ENCODE measurements at regions of chr16 and their contacts with region 1.

Region 1: GRCh38 chr16:11639925-11640899 is 28.0 kb upstream of the SNN start:
- DNase-seq: peak; percentile 54
- H3K4me3 ChIP-seq: no peak overlapping the region
- H3K27ac ChIP-seq: no peak overlapping the region
- H3K4me1 ChIP-seq: peaks cover 14% of the 10 kb centered on the region
- H3K27me3 ChIP-seq: no peaks in the 10 kb centered on the region
- CTCF ChIP-seq: no peak

Region 2: DNA sequence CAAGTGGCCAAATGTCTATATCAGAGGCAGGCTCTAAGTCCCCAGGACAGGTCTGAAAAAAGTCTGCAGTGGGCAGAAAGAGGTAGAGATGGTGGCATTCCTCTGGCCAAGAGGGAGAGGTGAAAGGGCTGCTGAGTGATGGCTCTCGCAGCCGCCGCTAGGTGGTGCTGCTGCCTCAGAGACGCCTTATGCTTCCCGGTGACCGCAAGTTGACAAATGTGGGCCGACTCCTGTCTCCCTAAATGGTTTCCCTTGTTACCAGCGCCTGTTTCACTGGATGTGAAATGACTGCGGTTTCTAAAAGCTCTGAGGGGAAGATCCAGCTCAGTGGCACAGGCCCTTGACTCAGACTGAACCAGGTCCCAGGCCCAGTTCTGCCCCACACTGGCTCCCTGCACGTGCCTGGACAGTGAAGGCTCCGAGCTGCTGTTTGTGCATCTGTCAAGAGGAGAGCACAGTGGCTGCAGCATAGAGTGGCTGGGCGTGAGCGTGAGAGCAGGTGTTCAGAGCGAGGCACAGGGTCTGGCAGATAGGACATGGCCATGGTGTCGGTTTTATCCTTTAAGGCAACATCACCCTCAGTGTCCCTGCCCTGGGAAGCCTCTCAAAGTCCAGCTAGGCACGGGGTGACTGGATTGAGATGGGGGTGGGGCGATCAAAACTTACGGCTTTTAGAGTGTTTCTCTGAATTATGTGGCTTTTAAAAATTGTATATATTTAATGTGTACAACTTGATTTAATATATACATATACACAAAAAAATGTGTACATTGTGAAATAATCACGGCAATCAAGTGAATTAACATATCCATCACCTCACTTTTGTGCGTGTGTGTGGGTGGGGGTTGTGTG is 675.9 kb before region 1 on chr16:
- CTCF ChIA-PET with region 1: no interaction called
- POLR2A ChIA-PET with region 1: no interaction called
- intact Hi-C with region 1: loop called (anchors 5 kb)
- DNase-seq: peak; percentile 83
- H3K4me3 ChIP-seq: no peak overlapping the region
- H3K27ac ChIP-seq: no peak overlapping the region
- H3K4me1 ChIP-seq: no peaks in the 10 kb centered on the region
- H3K27me3 ChIP-seq: no peaks in the 10 kb centered on the region
- CTCF ChIP-seq: peak; percentile 98

Region 3: DNA sequence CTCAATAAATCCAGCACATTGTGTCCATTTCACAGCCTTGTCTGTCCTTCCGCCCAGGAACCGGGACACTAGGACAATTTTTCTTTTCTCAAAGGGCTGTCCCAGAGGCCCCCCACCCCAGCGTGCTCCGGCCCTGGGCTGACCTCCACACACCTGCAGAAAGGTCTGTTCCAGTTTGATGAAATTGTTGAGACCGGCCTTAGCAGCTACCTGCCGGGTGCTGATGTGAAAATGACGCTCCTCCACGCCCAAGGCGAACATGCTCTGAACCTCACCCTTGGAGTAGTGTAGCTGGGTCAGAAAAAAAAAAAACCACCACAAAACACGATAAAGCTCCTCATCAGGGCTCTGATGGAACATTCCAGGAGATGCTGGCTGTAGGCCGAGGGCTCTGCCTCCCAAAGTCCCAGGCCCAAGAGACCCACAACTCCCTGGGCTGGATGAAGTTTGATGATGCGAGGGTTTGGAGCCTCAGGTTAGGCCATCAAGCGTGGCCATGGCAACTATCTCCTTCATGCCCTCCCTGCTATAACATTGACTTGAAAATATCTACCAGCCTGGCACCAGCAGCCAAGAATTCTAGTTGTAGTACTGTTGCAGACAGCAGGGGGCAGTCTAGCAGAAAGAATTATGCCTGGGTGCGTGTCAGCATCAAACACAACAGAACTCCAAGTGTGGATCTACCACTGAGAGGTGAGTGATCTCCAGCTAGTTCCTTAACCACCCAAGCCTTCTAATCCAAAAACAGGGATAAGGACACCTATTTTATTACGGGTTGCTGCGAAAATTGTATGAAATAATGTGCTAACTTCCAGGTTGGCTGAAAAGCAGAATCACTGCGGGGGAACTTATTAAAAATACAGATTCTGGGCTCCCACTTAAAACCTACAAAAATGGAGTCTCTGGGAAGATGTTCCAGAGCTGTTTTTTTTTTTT is 232.9 kb before region 1 on chr16:
- CTCF ChIA-PET with region 1: interaction called, 12 read pairs
- POLR2A ChIA-PET with region 1: no interaction called
- intact Hi-C with region 1: loop called (anchors 2 kb)
- DNase-seq: peak; percentile 82
- H3K4me3 ChIP-seq: no peak overlapping the region
- H3K27ac ChIP-seq: no peak overlapping the region
- H3K4me1 ChIP-seq: peaks cover 19% of the 10 kb centered on the region
- H3K27me3 ChIP-seq: no peaks in the 10 kb centered on the region
- CTCF ChIP-seq: peak; percentile 84

Region 4: DNA sequence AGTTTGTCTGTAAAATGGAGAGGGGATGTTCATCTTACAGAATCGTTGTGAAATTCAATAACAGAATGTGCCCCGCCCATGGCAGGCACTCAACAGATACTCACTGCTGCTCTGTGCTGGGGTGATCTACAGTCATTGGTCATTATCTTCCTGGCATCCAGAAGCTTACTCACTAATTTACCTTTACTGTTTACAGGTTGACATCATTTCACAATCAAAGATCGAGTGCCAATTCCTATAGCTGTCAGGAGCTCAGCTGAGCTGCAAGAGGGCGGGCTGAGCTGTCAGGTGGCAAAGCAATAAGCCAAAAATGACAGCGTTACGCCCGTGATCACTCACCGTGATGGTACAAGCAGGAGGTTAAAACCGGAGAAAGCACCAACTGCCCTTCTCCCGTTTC is 104.7 kb before region 1 on chr16:
- CTCF ChIA-PET with region 1: interaction called, 7 read pairs
- POLR2A ChIA-PET with region 1: no interaction called
- intact Hi-C with region 1: loop called (anchors 5 kb)
- DNase-seq: no peak
- H3K4me3 ChIP-seq: no peak overlapping the region
- H3K27ac ChIP-seq: no peak overlapping the region
- H3K4me1 ChIP-seq: no peaks in the 10 kb centered on the region
- H3K27me3 ChIP-seq: no peaks in the 10 kb centered on the region
- CTCF ChIP-seq: no peak

Region 5: GRCh38 chr16:11557801-11558200 is 82.4 kb before region 1 on chr16:
- CTCF ChIA-PET with region 1: interaction called, 10 read pairs
- POLR2A ChIA-PET with region 1: no interaction called
- intact Hi-C with region 1: no loop called
- DNase-seq: no peak
- H3K4me3 ChIP-seq: no peak overlapping the region
- H3K27ac ChIP-seq: no peak overlapping the region
- H3K4me1 ChIP-seq: no peaks in the 10 kb centered on the region
- H3K27me3 ChIP-seq: no peaks in the 10 kb centered on the region
- CTCF ChIP-seq: no peak

Region 6: GRCh38 chr16:11797166-11797956 is 157.1 kb after region 1 on chr16 and contains the start of gene ZC3H7A:
- CTCF ChIA-PET with region 1: no interaction called
- POLR2A ChIA-PET with region 1: interaction called, 14 read pairs
- intact Hi-C with region 1: no loop called
- DNase-seq: peak; percentile 98
- H3K4me3 ChIP-seq: peak within 1 kb of the TSS; percentile 83
- H3K27ac ChIP-seq: peak within 1 kb of the TSS; percentile 85
- H3K4me1 ChIP-seq: peaks cover 19% of the 10 kb centered on the region
- H3K27me3 ChIP-seq: no peaks in the 10 kb centered on the region
- CTCF ChIP-seq: peak; percentile 55
- total RNA-seq, gene ZC3H7A: 65.0 and 67.2 TPM in 2 replicates

Region 7: DNA sequence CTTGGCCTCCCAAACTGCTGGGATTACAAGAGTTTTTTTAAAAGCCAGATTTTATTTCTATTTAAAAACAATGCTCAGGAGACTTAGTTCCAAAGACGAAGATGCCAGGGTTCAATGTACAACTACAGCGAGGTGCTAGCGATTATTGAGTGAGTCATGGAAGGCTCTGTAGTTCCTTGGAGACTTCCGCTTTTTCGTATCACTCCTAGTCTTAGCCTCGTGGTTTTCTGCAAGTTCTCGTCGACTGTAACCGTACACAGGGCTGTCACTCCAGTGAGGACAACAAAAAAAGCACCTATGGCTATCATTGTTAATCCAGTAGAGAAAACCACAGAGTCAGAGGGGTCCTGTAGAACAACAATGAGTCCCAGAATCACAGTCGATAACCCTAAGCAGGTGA is 179.6 kb after region 1 on chr16:
- CTCF ChIA-PET with region 1: no interaction called
- POLR2A ChIA-PET with region 1: no interaction called
- intact Hi-C with region 1: loop called (anchors 10 kb)
- DNase-seq: no peak
- H3K4me3 ChIP-seq: no peak overlapping the region
- H3K27ac ChIP-seq: no peak overlapping the region
- H3K4me1 ChIP-seq: no peaks in the 10 kb centered on the region
- H3K27me3 ChIP-seq: no peaks in the 10 kb centered on the region
- CTCF ChIP-seq: no peak

Region 8: GRCh38 chr16:12240036-12240435 is 599.8 kb after region 1 on chr16:
- CTCF ChIA-PET with region 1: no interaction called
- POLR2A ChIA-PET with region 1: no interaction called
- intact Hi-C with region 1: no loop called
- DNase-seq: no peak
- H3K4me3 ChIP-seq: no peak overlapping the region
- H3K27ac ChIP-seq: no peak overlapping the region
- H3K4me1 ChIP-seq: no peaks in the 10 kb centered on the region
- H3K27me3 ChIP-seq: no peaks in the 10 kb centered on the region
- CTCF ChIP-seq: no peak

Measured in A673 (cell line).